Activated naive CD4-positive, alpha-beta T cell treated with anti-CD3 and anti-CD28 coated beads for 36 hours (primary cell): ENCODE measurements at regions of chr3 and their contacts with region 1.

Region 1: GRCh38 chr3:114418724-114419543 is 125.1 kb downstream of the TIGIT start:
- DNase-seq: no peak
- H3K4me3 Mint-ChIP-seq: peak overlapping the region; percentile 36
- H3K27ac Mint-ChIP-seq: peak overlapping the region; percentile 56
- H3K4me1 Mint-ChIP-seq: peaks cover 32% of the 10 kb centered on the region
- H3K27me3 Mint-ChIP-seq: no peaks in the 10 kb centered on the region

Region 2: DNA sequence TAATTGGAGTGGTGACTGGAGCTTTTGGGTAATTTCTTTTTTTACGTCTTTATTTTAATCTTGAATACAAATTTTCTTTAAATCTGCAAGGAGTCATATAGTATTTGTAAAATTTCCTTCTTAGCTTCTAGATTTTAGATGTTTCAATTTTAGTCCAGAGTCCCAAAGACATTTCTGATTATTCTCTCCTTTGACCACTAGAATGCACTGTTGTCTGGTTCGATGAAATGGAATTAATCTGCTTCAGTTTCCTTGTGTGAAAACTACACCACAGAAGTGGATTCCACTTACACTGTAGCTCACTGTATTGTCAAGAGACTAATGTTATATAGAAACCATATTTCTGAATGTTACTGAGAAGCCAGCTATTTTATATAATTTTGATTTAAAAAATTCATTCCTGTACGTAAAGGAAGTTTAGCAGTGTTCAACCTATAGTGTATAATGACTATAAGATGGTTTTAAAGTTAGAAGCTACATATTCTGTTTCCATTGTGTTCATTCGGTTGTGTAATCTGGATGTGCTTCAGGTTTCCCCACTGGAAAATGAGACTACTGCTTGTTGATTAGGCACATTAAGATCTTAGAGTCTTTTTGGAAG is 574.2 kb before region 1 on chr3:
- CTCF ChIA-PET with region 1: no interaction called
- intact Hi-C with region 1: loop called (anchors 2 kb)
- DNase-seq: no peak
- H3K4me3 Mint-ChIP-seq: no peak overlapping the region
- H3K27ac Mint-ChIP-seq: no peak overlapping the region
- H3K4me1 Mint-ChIP-seq: no peaks in the 10 kb centered on the region
- H3K27me3 Mint-ChIP-seq: no peaks in the 10 kb centered on the region

Region 3: DNA sequence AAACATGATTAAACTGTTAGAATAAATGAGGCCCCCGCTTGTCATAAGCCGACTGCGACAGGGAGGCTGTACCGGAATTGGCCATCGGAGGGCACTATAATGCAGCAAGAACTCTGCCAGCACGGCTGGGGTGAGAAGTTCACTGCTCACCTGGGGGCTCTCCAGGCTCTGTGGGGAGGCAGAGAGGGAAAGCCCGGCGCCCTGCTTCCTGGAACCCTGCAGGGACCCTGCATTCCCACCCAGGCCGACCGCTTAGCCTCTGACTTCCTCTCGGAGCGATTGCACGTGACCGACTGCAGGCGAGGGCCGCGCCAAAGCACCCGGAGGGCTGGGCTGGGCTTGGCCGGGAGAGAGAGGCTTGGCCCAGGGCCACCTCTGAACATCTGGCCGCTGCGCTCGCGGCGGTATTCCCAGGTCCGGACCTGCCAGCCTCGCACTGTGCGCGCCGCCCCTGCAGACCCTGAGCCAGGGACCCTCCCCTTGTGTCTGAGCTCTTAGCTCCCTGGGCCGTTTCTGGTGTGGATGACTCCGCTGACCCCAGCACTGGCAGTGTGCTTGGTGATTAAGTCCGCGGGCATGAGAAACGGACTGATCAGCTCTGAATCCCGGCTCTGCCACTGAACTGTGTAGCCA is 266.3 kb before region 1 on chr3:
- CTCF ChIA-PET with region 1: interaction called, 7 read pairs
- intact Hi-C with region 1: loop called (anchors 1 kb)
- DNase-seq: peak; percentile 90
- H3K4me3 Mint-ChIP-seq: peak overlapping the region; percentile 43
- H3K27ac Mint-ChIP-seq: peak overlapping the region; percentile 53
- H3K4me1 Mint-ChIP-seq: no peaks in the 10 kb centered on the region
- H3K27me3 Mint-ChIP-seq: no peaks in the 10 kb centered on the region

Region 4: GRCh38 chr3:114171677-114172076 is 247.3 kb before region 1 on chr3:
- CTCF ChIA-PET with region 1: no interaction called
- intact Hi-C with region 1: no loop called
- DNase-seq: no peak
- H3K4me3 Mint-ChIP-seq: no peak overlapping the region
- H3K27ac Mint-ChIP-seq: no peak overlapping the region
- H3K4me1 Mint-ChIP-seq: no peaks in the 10 kb centered on the region
- H3K27me3 Mint-ChIP-seq: no peaks in the 10 kb centered on the region

Region 5: DNA sequence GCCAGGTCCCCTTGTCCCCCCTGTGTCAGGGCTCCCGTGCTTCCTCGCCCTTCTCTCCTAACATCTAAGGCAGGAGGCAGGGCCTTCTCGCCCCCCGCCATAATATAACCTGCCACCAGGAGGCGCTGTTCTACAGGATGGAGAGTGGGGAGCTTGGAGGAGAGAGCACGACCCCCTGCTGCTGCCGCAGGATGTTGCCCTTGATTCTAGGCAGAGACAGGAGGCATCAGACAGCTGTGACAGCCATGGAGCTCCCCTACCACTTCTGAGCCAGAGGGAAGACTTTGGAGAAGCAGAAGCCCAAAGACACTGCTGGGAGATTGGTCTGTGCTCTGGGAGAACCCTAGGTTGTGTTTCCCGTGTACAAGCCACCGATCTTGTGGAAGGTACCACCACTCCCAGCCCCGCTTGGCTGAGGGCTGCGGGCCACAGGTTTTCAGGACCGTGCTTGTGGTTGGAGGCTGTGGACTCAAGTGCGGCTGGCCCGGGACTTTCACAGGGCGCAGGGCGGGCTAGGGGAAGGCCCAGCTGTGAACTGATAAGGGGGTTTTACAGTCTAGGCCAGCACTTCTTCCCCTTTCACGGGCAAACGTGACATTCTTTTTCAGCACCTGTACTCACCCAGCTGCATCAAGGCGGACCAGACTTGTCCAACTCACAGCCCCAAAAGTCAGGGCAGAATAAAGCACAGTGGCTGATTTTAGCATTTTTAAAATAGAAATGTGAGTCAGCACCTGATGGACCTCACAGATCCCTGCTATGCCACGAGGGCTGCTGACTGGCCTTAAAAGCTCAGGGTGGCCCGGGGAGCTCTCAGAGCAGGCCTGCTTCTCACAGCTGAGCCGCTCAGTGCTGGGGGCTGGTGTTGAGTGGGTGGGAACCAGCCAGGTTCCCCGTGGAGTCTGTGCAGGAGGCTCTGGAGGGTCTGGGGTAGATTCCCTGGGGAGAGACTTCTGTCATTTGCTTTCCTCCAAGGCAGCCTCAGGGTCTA is 127.7 kb before region 1 on chr3:
- CTCF ChIA-PET with region 1: interaction called, 8 read pairs
- intact Hi-C with region 1: loop called (anchors 1 kb)
- DNase-seq: peak; percentile 93
- H3K4me3 Mint-ChIP-seq: peak overlapping the region; percentile 33
- H3K27ac Mint-ChIP-seq: peak overlapping the region; percentile 85
- H3K4me1 Mint-ChIP-seq: peaks cover 7% of the 10 kb centered on the region
- H3K27me3 Mint-ChIP-seq: no peaks in the 10 kb centered on the region

Region 6: GRCh38 chr3:114383875-114384557 is 34.9 kb before region 1 on chr3:
- CTCF ChIA-PET with region 1: interaction called, 74 read pairs
- intact Hi-C with region 1: loop called (anchors 1 kb)
- DNase-seq: peak; percentile 82
- H3K4me3 Mint-ChIP-seq: peak overlapping the region; percentile 70
- H3K27ac Mint-ChIP-seq: peak overlapping the region; percentile 67
- H3K4me1 Mint-ChIP-seq: peaks cover 13% of the 10 kb centered on the region
- H3K27me3 Mint-ChIP-seq: no peaks in the 10 kb centered on the region

Region 7: GRCh38 chr3:114447545-114447944 is 28.6 kb after region 1 on chr3:
- CTCF ChIA-PET with region 1: interaction called, 12 read pairs
- intact Hi-C with region 1: no loop called
- DNase-seq: no peak
- H3K4me3 Mint-ChIP-seq: no peak overlapping the region
- H3K27ac Mint-ChIP-seq: no peak overlapping the region
- H3K4me1 Mint-ChIP-seq: peaks cover 1% of the 10 kb centered on the region
- H3K27me3 Mint-ChIP-seq: no peaks in the 10 kb centered on the region

Region 8: DNA sequence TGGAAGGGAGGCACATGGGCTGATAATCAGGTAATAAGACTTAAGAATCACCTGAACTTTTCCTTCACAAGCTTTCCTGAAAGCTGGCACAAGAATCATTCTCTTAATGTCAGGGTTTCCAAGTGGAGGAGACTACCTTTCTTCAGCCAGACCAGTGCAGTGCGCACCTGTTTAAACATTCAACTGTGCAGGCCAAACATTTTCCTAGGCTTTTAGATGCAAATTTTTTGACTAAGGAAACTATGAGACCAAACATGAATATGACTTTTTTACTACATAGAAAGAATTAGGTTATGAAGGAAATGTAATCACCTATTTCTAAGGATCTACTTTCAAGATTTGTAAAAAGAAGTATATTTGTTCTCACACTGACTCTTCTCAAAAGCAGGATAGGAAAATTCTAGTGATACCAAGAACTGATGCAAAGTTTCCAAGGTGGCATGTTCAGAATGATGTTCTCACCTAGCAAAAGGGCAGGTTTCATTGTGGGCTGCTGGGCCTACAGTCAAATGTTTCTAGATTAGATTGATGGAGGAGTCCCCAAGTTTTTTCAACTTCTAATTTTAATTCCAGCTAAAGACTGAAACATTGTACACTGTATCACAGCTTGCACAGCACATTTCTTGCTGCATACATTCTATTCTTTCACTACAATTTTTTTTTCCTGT is 214.0 kb after region 1 on chr3:
- CTCF ChIA-PET with region 1: no interaction called
- intact Hi-C with region 1: loop called (anchors 1 kb)
- DNase-seq: peak; percentile 60
- H3K4me3 Mint-ChIP-seq: no peak overlapping the region
- H3K27ac Mint-ChIP-seq: peak overlapping the region; percentile 38
- H3K4me1 Mint-ChIP-seq: peaks cover 17% of the 10 kb centered on the region
- H3K27me3 Mint-ChIP-seq: no peaks in the 10 kb centered on the region

Region 9: GRCh38 chr3:114697401-114697800 is 278.5 kb after region 1 on chr3:
- CTCF ChIA-PET with region 1: no interaction called
- intact Hi-C with region 1: no loop called
- DNase-seq: no peak
- H3K4me3 Mint-ChIP-seq: no peak overlapping the region
- H3K27ac Mint-ChIP-seq: no peak overlapping the region
- H3K4me1 Mint-ChIP-seq: peaks cover 10% of the 10 kb centered on the region
- H3K27me3 Mint-ChIP-seq: no peaks in the 10 kb centered on the region